ENCODE measurements at regions of chr20 and their contacts with region 1.

Region 1: DNA sequence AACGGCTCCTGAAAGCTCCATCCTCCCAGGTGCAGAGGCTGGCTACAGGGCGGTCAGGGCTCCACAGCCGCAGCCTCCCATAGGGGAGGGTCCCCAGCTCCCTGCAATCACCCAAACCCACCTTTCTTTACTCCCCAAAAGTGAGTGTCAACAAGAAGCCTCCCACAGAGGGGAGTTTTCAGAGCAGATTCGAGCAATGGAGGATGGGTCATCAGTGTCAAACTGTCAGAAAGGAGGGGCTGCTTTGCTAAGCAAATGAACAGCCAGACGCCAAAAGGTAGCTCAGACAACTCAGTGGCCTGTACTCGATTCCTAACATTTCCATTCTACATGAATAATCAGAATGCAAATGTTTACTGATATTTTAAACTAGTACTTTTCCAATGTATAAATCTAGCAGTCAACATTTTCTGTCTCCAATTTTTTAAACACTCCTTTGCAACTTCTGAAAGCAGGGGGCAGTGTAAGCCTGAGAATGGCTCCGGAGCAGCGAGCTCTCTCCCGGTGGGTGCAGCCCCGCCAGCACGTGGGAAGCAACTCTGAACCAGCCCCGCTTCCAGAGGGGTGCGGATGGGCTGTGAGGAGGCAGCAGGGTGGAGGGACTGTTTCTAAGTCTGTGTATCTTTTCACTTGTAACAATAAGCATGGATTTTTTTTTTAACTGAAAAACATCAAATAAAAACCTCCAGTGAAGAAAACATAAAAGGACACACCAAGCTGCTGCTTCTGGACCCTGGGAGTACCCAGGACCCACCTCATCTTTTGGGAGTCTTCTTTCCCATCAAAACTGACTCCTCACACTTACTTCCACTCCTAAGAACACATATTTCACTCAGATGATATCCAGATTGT is 54.9 kb downstream of the TAF4 start:
- H3K4me3 Mint-ChIP-seq: no peak overlapping the region
- H3K27ac Mint-ChIP-seq: no peak overlapping the region
- H3K4me1 Mint-ChIP-seq: peaks cover 18% of the 10 kb centered on the region
- H3K27me3 Mint-ChIP-seq: no peaks in the 10 kb centered on the region

Region 2: DNA sequence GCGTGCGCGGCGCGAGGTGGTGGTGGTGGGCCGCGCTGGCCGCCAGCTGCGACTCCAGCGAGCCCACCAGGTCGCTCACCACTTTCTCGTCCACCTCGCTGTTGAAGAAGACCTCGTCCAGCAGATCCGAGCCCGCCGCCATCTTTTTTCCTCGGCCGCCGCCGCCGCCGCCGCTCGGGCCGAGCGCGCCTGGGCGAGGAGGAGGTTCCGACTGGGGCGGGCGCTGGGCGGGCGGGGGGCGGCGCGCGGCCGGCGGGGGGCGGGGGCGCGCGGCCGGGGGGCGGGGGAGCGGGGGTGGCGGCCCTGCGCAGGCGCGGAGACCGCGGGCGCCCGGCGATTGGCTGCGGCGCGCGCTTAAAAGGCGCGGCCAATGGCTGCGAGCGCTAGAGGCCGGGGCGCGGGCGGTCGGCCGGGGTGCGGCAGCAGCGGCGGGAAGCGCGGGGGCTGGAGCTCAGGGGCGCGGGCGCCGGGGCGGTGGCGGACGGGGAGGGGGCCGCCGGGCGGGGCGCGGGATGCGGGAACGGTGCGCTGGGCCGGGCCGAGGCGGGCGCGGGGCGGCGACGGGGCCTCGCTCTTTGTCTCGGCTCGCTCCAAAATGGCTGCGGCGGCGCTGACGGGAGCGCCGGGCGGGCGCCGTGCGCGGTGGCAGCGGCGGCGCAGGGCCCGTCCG is 55.0 kb after region 1 on chr20 and contains the start of gene TAF4:
- intact Hi-C with region 1: loop called (anchors 10 kb)
- H3K4me3 Mint-ChIP-seq: peak within 1 kb of the TSS; percentile 82
- H3K27ac Mint-ChIP-seq: peak within 1 kb of the TSS; percentile 87
- H3K4me1 Mint-ChIP-seq: peaks cover 51% of the 10 kb centered on the region
- H3K27me3 Mint-ChIP-seq: peaks cover 21% of the 10 kb centered on the region

Region 3: GRCh38 chr20:62136283-62137091 is 125.7 kb after region 1 on chr20:
- intact Hi-C with region 1: loop called (anchors 2 kb)
- H3K4me3 Mint-ChIP-seq: no peak overlapping the region
- H3K27ac Mint-ChIP-seq: peak overlapping the region; percentile 8
- H3K4me1 Mint-ChIP-seq: peaks cover 83% of the 10 kb centered on the region
- H3K27me3 Mint-ChIP-seq: no peaks in the 10 kb centered on the region

Region 4: GRCh38 chr20:62156592-62157386 is 146.0 kb after region 1 on chr20:
- intact Hi-C with region 1: loop called (anchors 1 kb)
- H3K4me3 Mint-ChIP-seq: no peak overlapping the region
- H3K27ac Mint-ChIP-seq: peak overlapping the region; percentile 36
- H3K4me1 Mint-ChIP-seq: peaks cover 31% of the 10 kb centered on the region
- H3K27me3 Mint-ChIP-seq: no peaks in the 10 kb centered on the region